ENCODE measurements at regions of chr10 and their contacts with region 1.

Region 1: DNA sequence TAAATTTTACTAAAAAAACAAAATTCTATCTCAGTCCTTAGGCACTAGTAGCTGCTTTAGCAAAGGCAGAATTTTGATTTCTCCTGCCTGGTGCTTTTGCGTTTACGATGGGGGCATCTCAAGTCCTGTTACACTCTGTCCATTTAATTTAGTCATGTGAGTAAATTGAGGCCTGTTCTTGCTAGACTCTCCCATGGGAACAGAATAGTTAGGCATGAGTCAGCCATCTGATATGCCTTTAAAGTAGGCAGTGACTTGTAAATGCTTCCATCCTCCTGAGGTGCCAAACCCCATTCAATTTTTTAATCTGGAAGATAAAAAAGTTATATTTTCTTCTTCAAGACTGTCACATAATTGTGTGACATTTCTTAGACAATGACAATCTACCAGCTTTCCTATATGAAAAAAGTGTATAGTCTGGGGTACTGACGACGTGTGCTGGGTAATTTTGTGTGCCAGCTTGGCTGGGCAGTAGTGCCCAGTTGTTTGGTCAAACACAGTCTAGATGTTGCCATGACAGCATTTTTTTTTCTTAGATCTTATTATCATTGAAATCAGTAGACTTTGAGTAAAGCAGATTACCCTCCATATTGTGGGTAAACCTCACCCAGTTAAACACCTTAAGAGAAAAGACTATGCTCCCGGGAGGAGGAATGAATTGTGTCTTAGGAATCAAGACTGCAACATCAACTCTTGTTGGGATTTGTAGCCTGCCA is 603.4 kb downstream of the SORCS1 start:
- DNase-seq: no peak
- H3K4me3 ChIP-seq: no peak overlapping the region
- H3K27ac ChIP-seq: no peak overlapping the region
- H3K27me3 ChIP-seq: no peaks in the 10 kb centered on the region
- CTCF ChIP-seq: no peak

Region 2: DNA sequence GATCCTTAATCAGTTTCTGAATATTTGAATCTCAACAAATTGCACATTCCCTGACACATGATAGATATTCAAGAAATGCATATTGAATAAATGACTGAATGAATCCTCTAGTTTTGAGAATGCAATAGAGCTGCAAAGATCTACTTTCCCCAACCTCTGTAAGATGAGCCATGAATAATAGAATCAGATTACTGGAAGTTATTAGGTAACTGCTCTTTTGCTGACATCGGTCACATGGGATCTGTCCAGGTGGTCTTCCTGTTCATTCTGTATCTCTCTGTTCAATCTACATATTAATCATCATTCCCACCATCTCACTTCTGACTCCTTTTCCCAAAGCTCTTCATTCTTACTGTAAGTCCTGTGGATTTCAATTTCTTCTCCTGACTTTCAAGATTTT is 35.2 kb before region 1 on chr10:
- intact Hi-C with region 1: loop called in 1 of 2 experiments (anchors 5 kb)
- DNase-seq: no peak
- H3K4me3 ChIP-seq: no peak overlapping the region
- H3K27ac ChIP-seq: no peak overlapping the region
- H3K27me3 ChIP-seq: no peaks in the 10 kb centered on the region
- CTCF ChIP-seq: no peak